Activated CD4-positive, alpha-beta T cell treated with anti-CD3 and anti-CD28 coated beads for 36 hours (primary cell): ENCODE measurements at regions of chr5 and their contacts with region 1.

Region 1: GRCh38 chr5:55936100-55936693 is 58.6 kb downstream of the IL6ST start:
- DNase-seq: peak; percentile 91
- ATAC-seq: peak; percentile 81
- H3K4me3 Mint-ChIP-seq: no peak overlapping the region
- H3K27ac Mint-ChIP-seq: no peak overlapping the region
- H3K4me1 Mint-ChIP-seq: peaks cover 16% of the 10 kb centered on the region
- H3K27me3 Mint-ChIP-seq: no peaks in the 10 kb centered on the region

Region 2: GRCh38 chr5:55923177-55923771 is 12.9 kb before region 1 on chr5:
- CTCF ChIA-PET with region 1: interaction called, 19 read pairs
- POLR2A ChIA-PET with region 1: interaction called, 3 read pairs
- intact Hi-C with region 1: no loop called
- DNase-seq: peak; percentile 41
- ATAC-seq: peak; percentile 64
- H3K4me3 Mint-ChIP-seq: peak overlapping the region; percentile 70
- H3K27ac Mint-ChIP-seq: peak overlapping the region; percentile 89
- H3K4me1 Mint-ChIP-seq: peaks cover 15% of the 10 kb centered on the region
- H3K27me3 Mint-ChIP-seq: no peaks in the 10 kb centered on the region

Region 3: GRCh38 chr5:56095579-56096102 is 159.4 kb after region 1 on chr5:
- CTCF ChIA-PET with region 1: interaction called, 18 read pairs
- POLR2A ChIA-PET with region 1: no interaction called
- intact Hi-C with region 1: no loop called
- DNase-seq: no peak
- ATAC-seq: no peak
- H3K4me3 Mint-ChIP-seq: peak overlapping the region; percentile 36
- H3K27ac Mint-ChIP-seq: peak overlapping the region; percentile 84
- H3K4me1 Mint-ChIP-seq: peaks cover 89% of the 10 kb centered on the region
- H3K27me3 Mint-ChIP-seq: no peaks in the 10 kb centered on the region

Region 4: GRCh38 chr5:56200856-56201666 is 264.9 kb after region 1 on chr5:
- CTCF ChIA-PET with region 1: interaction called, 97 read pairs
- POLR2A ChIA-PET with region 1: no interaction called
- intact Hi-C with region 1: loop called (anchors 1 kb)
- DNase-seq: peak; percentile 78
- ATAC-seq: peak; percentile 99
- H3K4me3 Mint-ChIP-seq: no peak overlapping the region
- H3K27ac Mint-ChIP-seq: peak overlapping the region; percentile 44
- H3K4me1 Mint-ChIP-seq: peaks cover 25% of the 10 kb centered on the region
- H3K27me3 Mint-ChIP-seq: no peaks in the 10 kb centered on the region

Region 5: DNA sequence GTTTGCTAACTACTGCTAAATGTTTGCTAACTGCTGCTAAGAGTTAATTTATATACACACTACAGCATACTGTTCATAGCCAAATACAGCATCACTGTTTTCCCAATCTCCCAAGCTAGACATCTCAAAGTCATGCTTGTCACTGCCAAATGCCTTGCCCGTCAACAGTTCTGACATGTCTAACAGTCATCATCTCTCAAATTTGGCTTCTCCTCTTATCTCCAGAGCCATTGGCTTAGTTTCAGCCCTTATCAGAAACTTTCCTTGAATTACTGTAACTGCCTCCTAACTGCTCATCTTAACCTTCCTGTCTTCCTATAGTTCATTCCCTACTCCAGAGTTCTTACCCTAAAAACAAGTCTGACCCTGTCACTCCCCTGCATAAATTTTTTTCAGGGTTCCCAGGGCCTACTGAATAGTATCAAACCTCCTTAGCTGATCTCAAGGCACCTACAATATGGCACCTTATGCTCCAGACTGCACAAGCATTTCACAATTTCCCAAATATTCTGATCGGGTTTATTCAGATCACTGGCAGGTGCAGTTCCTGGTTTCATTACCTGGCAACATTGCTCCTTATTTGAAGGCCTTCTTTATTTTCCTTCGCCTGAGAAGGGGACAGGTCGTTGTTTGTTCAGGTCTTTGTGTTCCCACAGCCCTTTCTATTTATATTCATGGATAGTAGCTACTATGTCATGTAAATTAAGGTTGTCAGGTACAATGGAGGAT is 352.8 kb after region 1 on chr5:
- CTCF ChIA-PET with region 1: no interaction called
- POLR2A ChIA-PET with region 1: no interaction called
- intact Hi-C with region 1: no loop called
- DNase-seq: no peak
- ATAC-seq: no peak
- H3K4me3 Mint-ChIP-seq: no peak overlapping the region
- H3K27ac Mint-ChIP-seq: no peak overlapping the region
- H3K4me1 Mint-ChIP-seq: peaks cover 9% of the 10 kb centered on the region
- H3K27me3 Mint-ChIP-seq: no peaks in the 10 kb centered on the region

Region 6: DNA sequence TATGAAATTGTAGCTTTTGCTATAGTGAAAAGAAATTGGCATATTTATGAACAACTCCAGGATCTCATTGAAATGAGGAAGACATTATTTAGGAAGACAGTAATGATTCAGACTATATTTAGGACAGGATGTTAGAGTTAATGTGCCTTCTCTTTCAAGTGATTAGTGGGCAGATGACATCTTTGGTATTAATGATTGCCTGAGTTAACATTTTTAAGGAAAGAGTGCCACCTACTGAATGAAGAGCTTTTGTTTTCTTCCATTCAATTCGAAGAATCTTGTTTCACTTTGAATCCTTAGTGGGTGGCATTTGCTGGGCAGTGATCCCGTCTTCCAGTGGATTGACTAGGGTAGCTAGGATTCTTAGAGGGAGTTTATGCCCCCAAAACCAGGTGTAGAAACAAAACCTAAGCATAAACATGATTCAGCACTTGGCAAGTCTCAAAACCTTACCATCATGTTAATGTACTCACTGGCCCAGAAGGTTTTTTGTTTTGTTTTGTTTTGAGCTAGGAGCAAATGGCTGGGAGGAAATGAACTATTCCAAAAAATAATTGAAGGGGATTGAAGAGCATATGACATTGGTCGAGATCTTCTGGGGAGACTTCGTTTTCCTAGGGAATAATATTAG is 902.3 kb after region 1 on chr5:
- CTCF ChIA-PET with region 1: interaction called, 4 read pairs
- POLR2A ChIA-PET with region 1: no interaction called
- intact Hi-C with region 1: loop called in 1 of 2 experiments (anchors 5 kb)
- DNase-seq: no peak
- ATAC-seq: peak; percentile 67
- H3K4me3 Mint-ChIP-seq: peak overlapping the region; percentile 37
- H3K27ac Mint-ChIP-seq: peak overlapping the region; percentile 68
- H3K4me1 Mint-ChIP-seq: peaks cover 84% of the 10 kb centered on the region
- H3K27me3 Mint-ChIP-seq: no peaks in the 10 kb centered on the region